GM23248 (cell line): ENCODE measurements at regions of chr17 and their contacts with region 1.

Region 1: GRCh38 chr17:10327640-10328039 is 45.2 kb downstream of the MYH13 start:
- DNase-seq: peak; percentile 85
- H3K4me3 ChIP-seq: no peak overlapping the region
- H3K27ac ChIP-seq: no peak overlapping the region
- H3K4me1 ChIP-seq: no peaks in the 10 kb centered on the region
- H3K27me3 ChIP-seq: no peaks in the 10 kb centered on the region; the same call in 1 of the 2 replicates

Region 2: GRCh38 chr17:9968902-9969617 is 358.6 kb before region 1 on chr17:
- in situ Hi-C with region 1: loop called (anchors 10 kb)
- DNase-seq: peak; percentile 77
- H3K4me3 ChIP-seq: no peak overlapping the region
- H3K27ac ChIP-seq: no peak overlapping the region
- H3K4me1 ChIP-seq: peaks cover 25% of the 10 kb centered on the region
- H3K27me3 ChIP-seq: no peaks in the 10 kb centered on the region

Region 3: DNA sequence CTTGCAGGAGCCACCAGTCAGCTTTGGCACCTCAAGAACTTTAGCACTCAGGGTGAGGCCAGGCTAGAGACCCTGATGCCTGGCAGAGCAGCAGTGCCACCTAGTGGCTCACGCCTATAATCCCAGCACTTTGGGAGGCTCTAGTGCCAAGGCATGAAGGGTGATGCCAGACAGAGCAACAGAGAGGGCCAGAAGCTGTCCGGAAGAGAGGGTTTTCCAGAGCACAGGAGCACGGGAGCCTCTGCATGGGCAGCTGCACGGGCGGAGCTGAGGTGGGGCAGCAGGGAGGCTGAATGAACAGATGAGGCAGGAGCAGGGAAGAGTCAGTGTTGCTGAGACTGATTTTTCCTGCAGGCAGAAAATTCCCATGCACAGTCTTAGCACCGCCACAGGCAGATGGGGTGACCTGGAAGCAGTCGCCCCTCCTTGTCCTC is 290.6 kb after region 1 on chr17:
- in situ Hi-C with region 1: loop called (anchors 5 kb)
- DNase-seq: peak; percentile 84
- H3K4me3 ChIP-seq: no peak overlapping the region
- H3K27ac ChIP-seq: no peak overlapping the region
- H3K4me1 ChIP-seq: peaks cover 13% of the 10 kb centered on the region
- H3K27me3 ChIP-seq: no peaks in the 10 kb centered on the region